H1 (cell line): ENCODE measurements at regions of chr13 and their contacts with region 1.

Region 1: DNA sequence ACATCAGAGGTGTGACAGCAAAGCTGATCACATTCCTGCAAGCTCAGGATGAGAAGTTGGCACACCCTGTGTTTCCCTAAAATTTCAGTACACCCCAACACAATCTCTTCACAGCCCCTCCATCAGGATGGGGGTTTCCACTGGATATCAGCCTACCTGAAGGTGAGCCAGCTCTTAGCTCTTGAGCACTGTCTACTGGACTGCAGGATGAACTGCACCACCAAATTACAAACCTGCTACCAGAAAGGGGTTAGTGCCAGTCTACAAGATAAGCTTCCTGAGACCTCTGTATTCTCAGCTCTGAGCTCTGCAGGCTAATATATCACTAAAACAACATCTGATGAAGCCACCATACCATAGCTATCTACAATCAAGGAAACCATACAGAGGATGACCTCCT is 1616.2 kb upstream of the SPRY2 start:
- DNase-seq: no peak
- H3K4me3 ChIP-seq: no peak overlapping the region
- H3K27ac ChIP-seq: no peak overlapping the region
- H3K4me1 ChIP-seq: no peaks in the 10 kb centered on the region
- H3K27me3 ChIP-seq: no peaks in the 10 kb centered on the region
- CTCF ChIP-seq: peak; percentile 38 to 80 (median 68)
- EP300 ChIP-seq: no peak
- POLR2A ChIP-seq: no peak
- RAD21 ChIP-seq: peak; percentile 77 to 86

Region 2: DNA sequence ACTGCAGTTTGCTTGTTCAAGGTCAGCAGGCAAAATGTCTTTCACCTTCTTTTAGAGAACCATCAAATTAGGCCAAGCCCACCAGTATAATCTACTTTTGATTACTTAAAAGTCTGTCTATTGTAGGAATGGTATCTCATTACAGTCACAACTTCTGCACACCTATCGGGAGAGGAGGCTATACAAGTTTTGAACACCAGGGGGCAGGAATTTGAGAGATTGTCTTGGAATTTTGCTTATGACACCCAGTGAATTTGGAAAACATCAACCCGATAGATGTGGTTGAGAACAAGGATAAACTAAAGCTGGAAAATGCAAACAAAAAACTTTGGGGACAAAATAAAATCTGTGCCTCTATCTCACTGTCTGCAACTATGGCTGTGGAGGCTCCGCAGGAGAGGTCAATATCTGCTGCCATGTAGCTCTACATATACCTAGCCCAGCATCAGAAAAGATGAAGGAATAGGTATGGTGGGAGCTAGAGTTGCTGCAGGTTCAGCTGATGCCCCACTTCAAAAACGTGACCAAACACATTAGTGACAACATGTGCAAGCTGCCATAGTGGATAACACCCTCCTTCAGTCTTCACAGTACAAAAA is 317.1 kb before region 1 on chr13:
- CTCF ChIA-PET with region 1: interaction called, 14 read pairs
- POLR2A ChIA-PET with region 1: no interaction called
- DNase-seq: peak in 1 of 2 experiments; percentile 61
- H3K4me3 ChIP-seq: no peak overlapping the region
- H3K27ac ChIP-seq: no peak overlapping the region
- H3K4me1 ChIP-seq: no peaks in the 10 kb centered on the region
- H3K27me3 ChIP-seq: no peaks in the 10 kb centered on the region
- CTCF ChIP-seq: peak in 2 of 3 experiments; percentile 30 to 55; a peak in 2 of 4 replicates
- EP300 ChIP-seq: no peak
- POLR2A ChIP-seq: no peak
- RAD21 ChIP-seq: peak; percentile 25 to 48

Region 3: DNA sequence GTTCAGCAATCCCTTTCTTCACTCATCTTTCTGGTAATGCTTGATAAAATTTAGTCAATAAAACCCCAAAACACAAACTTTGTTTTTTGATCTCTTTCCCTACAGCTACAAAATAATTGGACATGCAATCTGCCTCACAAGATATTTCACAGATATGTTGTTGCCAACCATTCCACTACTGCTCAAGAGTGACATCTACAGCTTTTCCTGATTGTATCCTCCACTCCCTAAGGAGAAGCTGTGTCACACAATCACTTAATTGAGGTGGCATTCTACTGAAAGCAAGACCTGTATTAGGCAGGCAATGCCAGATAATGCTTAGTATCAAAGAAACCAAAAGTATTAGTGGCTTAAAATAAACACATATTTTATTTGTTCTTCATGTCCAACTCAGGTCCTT is 30.0 kb after region 1 on chr13:
- CTCF ChIA-PET with region 1: interaction called, 16 read pairs
- POLR2A ChIA-PET with region 1: no interaction called
- DNase-seq: no peak
- H3K4me3 ChIP-seq: peak overlapping the region in 1 of 4 experiments; percentile 25; a peak in 1 of 8 replicates
- H3K27ac ChIP-seq: no peak overlapping the region
- H3K4me1 ChIP-seq: peaks cover 0 to 21% (median 10%) of the 10 kb centered on the region in 4 experiments; a peak in 3 of 7 replicates
- H3K27me3 ChIP-seq: peaks cover 0 to 5% (median 2%) of the 10 kb centered on the region in 4 experiments; a peak in 4 of 7 replicates
- CTCF ChIP-seq: peak in 1 of 3 experiments; percentile 38; a peak in 2 of 4 replicates
- EP300 ChIP-seq: no peak
- POLR2A ChIP-seq: no peak
- RAD21 ChIP-seq: peak; percentile 60 to 62